ENCODE measurements at regions of chr1 and their contacts with region 1.

Region 1: GRCh38 chr1:42747125-42747524 is 7.1 kb upstream of the CLDN19 start:
- DNase-seq: peak; percentile 84
- H3K4me3 ChIP-seq: no peak overlapping the region
- H3K27ac ChIP-seq: peak overlapping the region in 1 of 8 donors; percentile 65
- H3K4me1 ChIP-seq: peaks cover 0 to 38% (median 11%) of the 10 kb centered on the region in 6 donors
- H3K27me3 ChIP-seq: no peaks in the 10 kb centered on the region
- CTCF ChIP-seq: peak in 10 of 11 experiments; percentile 35 to 69 (median 56)
- POLR2A ChIP-seq: no peak

Region 2: DNA sequence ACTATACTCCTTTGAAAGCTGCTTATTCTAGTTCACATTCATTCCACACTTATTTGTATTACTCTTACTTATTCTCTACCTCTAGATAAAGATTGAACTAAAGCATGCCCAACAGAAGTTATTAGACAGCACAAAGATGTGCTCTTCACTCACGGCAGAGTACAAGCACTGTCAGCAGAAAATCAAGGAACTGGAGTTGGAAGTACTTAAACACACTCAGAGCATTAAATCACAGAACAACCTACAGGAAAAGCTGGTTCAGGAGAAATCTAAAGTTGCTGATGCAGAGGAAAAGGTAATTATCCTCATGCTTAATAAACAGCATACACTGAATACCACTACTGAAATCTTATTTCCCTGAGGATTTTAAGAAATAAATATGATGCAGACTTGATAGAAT is 170.2 kb before region 1 on chr1:
- intact Hi-C with region 1: loop called (anchors 5 kb)
- DNase-seq: no peak
- H3K4me3 ChIP-seq: no peak overlapping the region
- H3K27ac ChIP-seq: no peak overlapping the region
- H3K4me1 ChIP-seq: no peaks in the 10 kb centered on the region
- H3K27me3 ChIP-seq: no peaks in the 10 kb centered on the region
- CTCF ChIP-seq: no peak
- POLR2A ChIP-seq: no peak

Region 3: DNA sequence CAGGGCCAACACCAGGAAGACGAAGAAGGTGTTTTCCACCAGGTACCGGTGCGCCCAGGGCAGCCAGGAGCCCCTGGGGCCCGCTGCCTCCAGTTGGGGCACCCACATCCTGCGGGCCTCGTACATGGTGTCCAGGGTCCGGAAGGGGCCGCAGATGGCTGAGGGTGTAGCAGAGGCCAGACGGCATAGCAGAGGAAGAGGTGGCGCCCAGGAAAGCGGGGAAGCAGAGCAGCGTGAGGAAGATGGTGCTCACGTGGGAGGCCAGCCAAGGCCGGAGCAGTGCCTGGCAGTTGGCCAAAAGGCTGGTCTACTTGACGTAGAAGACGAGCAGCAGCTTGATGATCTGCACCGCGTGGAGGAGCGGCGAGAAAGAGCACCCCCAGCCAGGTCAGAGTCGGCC is 139.7 kb after region 1 on chr1:
- intact Hi-C with region 1: no loop called
- DNase-seq: no peak
- H3K4me3 ChIP-seq: no peak overlapping the region
- H3K27ac ChIP-seq: no peak overlapping the region
- H3K4me1 ChIP-seq: no peaks in the 10 kb centered on the region
- H3K27me3 ChIP-seq: peaks cover 0 to 5% (median 0%) of the 10 kb centered on the region in 7 donors
- CTCF ChIP-seq: no peak
- POLR2A ChIP-seq: no peak

Region 4: GRCh38 chr1:43184995-43185394 is 437.9 kb after region 1 on chr1:
- intact Hi-C with region 1: no loop called
- DNase-seq: no peak
- H3K4me3 ChIP-seq: no peak overlapping the region
- H3K27ac ChIP-seq: no peak overlapping the region
- H3K4me1 ChIP-seq: no peaks in the 10 kb centered on the region
- H3K27me3 ChIP-seq: no peaks in the 10 kb centered on the region
- CTCF ChIP-seq: no peak
- POLR2A ChIP-seq: no peak

Measured in spleen (tissue), 13 donors.